Heart right ventricle (tissue), 16 donors: ENCODE measurements at regions of chr1 and their contacts with region 1.

Region 1: GRCh38 chr1:150072959-150073358 is 5.4 kb downstream of the VPS45 start:
- DNase-seq: no peak
- ATAC-seq: peak in 7 of 8 donors; percentile 43 to 68 (median 61)
- H3K4me3 ChIP-seq: no peak overlapping the region
- H3K27ac ChIP-seq: no peak overlapping the region
- H3K4me1 ChIP-seq: peaks cover 0 to 22% (median 12%) of the 10 kb centered on the region in 9 donors
- H3K27me3 ChIP-seq: no peaks in the 10 kb centered on the region
- CTCF ChIP-seq: peak; percentile 31 to 70 (median 56)

Region 2: GRCh38 chr1:150149271-150150132 is 76.5 kb after region 1 on chr1 and contains the start of gene PLEKHO1:
- intact Hi-C with region 1: loop called in 1 of 10 experiments (anchors 5 kb)
- DNase-seq: peak; percentile 85 to 90
- ATAC-seq: peak; percentile 70 to 89 (median 82)
- H3K4me3 ChIP-seq: peak within 1 kb of the TSS; percentile 67 to 94 (median 87)
- H3K27ac ChIP-seq: peak within 1 kb of the TSS; percentile 79 to 99 (median 93)
- H3K4me1 ChIP-seq: peaks cover 0 to 66% (median 51%) of the 10 kb centered on the region in 9 donors
- H3K27me3 ChIP-seq: no peaks in the 10 kb centered on the region
- CTCF ChIP-seq: no peak
- total RNA-seq, gene PLEKHO1: 29.3 to 82.3 (median 56.8) TPM

Region 3: GRCh38 chr1:150162862-150163706 is 90.1 kb after region 1 on chr1:
- intact Hi-C with region 1: loop called in 9 of 10 experiments (anchors 2 to 5 kb)
- DNase-seq: peak; percentile 71 to 90
- ATAC-seq: peak; percentile 88 to 93 (median 91)
- H3K4me3 ChIP-seq: peak overlapping the region in 8 of 10 donors; percentile 13 to 46 (median 30)
- H3K27ac ChIP-seq: peak overlapping the region; percentile 76 to 96 (median 90)
- H3K4me1 ChIP-seq: peaks cover 10 to 78% (median 37%) of the 10 kb centered on the region in 9 donors
- H3K27me3 ChIP-seq: no peaks in the 10 kb centered on the region
- CTCF ChIP-seq: peak in 1 of 9 donors; percentile 5

Region 4: DNA sequence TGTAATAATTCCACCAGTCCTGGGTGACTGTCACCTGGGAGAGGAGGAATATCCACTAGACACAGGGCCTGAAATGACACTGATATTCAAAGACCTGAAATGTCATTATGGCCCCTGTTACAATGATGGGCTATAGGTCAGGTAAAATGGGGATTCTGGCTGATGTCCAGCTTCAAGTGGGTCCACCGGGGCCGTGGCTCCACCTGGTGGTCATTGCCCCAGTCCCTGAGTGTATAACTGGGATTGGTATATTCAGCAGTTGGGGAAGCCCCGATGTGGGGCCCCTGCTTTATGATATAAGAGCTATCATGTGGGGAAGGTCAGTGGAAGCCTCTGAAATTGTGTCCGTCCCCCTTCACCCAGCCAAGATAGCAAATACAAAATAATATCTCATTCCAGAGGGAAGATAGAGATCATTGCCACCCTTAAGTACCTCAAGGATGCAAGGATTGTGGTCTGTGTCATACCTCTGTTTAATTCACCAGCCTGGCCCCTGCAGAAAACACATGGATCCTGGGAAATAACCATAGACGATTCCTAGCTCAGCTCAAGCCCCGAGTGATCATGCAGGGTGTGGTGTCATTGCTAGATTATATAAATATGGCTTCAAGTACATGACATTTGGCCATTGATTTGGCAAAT is 96.1 kb after region 1 on chr1:
- intact Hi-C with region 1: loop called in 9 of 10 experiments (anchors 1 to 5 kb)
- DNase-seq: peak; percentile 67 to 73
- ATAC-seq: peak; percentile 36 to 76 (median 70)
- H3K4me3 ChIP-seq: no peak overlapping the region
- H3K27ac ChIP-seq: no peak overlapping the region
- H3K4me1 ChIP-seq: peaks cover 0 to 27% (median 11%) of the 10 kb centered on the region in 9 donors
- H3K27me3 ChIP-seq: no peaks in the 10 kb centered on the region
- CTCF ChIP-seq: peak; percentile 72 to 91 (median 84)

Region 5: DNA sequence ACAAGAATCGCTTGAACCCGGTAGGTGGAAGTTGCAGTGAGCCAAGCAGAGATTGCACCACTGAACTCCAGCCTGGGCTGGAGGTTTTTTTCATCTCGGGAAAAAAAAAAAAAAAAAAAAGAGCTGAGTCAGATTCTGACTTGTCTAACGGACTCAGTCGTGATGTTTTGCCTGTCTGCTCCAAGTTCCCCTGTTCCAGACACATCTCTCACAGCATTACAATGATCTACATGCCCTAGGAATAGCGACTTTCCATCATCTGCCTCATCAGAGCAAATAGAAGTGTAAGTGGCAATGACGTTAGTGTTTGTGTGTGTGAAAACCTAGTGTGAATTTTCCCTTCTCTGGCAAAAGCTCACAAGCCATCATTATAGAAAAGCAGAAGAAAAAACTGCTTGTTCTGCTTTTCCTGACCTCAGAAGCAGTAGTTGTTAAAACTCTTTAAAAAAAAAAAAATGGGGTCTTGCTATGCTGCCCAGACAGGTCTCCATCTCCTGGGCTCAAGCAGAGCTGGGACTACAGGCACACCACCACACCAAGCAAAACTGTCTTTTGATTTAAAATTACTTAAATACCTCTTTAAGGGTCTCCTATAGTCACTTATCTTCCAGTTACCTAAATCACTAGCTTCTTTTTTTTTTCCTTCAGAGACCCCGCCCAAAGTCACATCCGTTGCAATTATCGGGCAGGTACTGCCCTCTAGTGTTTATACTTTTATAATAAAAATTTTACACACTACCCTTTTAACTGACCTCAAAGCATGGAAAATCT is 114.0 kb after region 1 on chr1:
- intact Hi-C with region 1: loop called in 1 of 10 experiments (anchors 5 kb)
- DNase-seq: peak in 1 of 2 donors; percentile 14
- ATAC-seq: peak; percentile 50 to 81 (median 68)
- H3K4me3 ChIP-seq: peak overlapping the region in 1 of 10 donors; percentile 6
- H3K27ac ChIP-seq: peak overlapping the region in 7 of 10 donors; percentile 3 to 79 (median 52)
- H3K4me1 ChIP-seq: peaks cover 0 to 28% (median 7%) of the 10 kb centered on the region in 9 donors
- H3K27me3 ChIP-seq: no peaks in the 10 kb centered on the region
- CTCF ChIP-seq: peak; percentile 26 to 74 (median 63)

Region 6: DNA sequence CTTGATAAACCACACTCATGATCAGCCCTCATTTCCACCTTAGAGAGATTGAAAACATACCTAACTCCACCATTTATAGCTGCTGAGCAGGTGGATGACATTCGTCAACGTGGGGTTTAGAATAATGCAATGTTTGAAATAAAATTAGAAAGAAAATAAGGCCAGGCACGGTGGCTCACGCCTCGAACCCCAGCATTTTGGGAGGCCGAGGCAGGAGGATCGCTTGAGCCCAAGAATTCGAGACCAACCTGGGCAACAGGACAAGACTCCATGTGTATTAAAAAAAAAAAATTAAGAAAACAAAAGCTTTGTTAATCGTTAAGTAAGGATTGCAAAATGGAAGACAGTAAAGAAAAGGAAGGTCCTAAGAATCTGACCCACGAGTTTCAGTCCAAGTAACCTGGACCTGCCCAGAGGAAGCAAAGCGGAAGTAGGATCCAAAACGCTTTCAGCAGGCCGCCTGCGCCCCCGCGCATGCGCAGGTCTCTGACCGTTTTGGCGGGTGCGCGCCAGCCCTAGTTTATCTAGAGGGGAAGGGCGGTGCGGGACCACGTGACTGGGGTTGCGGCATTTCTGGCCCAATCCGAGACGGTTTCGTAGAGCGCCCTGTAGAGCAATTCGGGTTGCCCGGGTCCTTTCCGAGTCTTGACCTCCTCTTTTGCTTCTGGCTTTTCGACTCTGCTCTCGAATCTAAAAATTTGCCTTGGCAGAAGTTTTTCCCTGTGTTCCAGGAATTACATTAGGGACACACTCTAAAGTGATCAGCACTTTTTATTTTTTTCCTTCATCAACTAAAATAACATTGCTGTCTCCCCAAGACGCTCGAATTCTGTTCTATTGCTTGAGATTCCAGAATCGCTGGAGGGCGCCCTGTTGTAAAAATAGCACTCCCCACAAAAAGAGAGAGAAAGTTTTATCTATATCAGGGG is 140.5 kb after region 1 on chr1:
- intact Hi-C with region 1: no loop called
- DNase-seq: peak; percentile 94 to 96
- ATAC-seq: peak; percentile 98 to 100 (median 100)
- H3K4me3 ChIP-seq: peak overlapping the region in 9 of 10 donors; percentile 31 to 56 (median 47)
- H3K27ac ChIP-seq: peak overlapping the region; percentile 26 to 92 (median 83)
- H3K4me1 ChIP-seq: peaks cover 0 to 13% (median 9%) of the 10 kb centered on the region in 9 donors
- H3K27me3 ChIP-seq: no peaks in the 10 kb centered on the region
- CTCF ChIP-seq: peak in 6 of 9 donors; percentile 15 to 58 (median 44)